ENCODE measurements at regions of chr6 and their contacts with region 1.

Region 1: DNA sequence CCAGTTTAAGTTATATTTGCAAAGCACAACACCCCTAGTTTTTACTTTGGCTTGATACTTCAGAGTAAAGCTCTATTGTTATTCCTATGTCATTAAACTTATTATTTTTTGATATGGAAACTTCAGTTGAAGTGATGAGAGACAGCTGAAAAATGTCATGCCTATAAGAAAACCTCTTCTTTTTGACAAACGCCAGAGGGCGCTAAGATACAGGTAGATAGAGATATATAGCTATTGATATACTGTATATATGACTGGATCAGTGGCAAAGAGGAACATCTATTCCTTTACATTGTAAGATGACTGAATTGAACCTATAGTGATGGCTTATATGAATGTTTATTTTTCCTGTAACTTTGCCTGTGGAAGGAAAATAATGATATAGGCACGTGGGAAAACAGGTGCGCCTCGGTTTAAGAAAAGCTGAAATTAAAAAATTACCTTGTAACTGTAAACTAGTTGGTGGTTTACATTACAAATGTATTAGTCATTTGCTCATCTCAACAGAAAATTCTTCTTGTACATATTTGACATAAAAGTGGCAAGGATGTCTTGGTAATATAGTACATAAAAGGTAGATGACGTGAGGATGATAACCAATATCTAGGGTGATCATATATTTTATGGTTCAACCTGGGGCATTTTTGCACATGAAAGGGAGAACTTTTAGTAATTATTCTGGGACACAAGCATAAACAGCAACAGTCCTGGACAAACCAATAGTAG is 74.1 kb downstream of the LAMA4 start:
- DNase-seq: peak; percentile 60
- ATAC-seq: peak; percentile 76
- H3K4me3 Mint-ChIP-seq: no peak overlapping the region
- H3K27ac Mint-ChIP-seq: no peak overlapping the region
- H3K4me1 Mint-ChIP-seq: no peaks in the 10 kb centered on the region
- H3K27me3 Mint-ChIP-seq: peaks cover 13% of the 10 kb centered on the region

Region 2: DNA sequence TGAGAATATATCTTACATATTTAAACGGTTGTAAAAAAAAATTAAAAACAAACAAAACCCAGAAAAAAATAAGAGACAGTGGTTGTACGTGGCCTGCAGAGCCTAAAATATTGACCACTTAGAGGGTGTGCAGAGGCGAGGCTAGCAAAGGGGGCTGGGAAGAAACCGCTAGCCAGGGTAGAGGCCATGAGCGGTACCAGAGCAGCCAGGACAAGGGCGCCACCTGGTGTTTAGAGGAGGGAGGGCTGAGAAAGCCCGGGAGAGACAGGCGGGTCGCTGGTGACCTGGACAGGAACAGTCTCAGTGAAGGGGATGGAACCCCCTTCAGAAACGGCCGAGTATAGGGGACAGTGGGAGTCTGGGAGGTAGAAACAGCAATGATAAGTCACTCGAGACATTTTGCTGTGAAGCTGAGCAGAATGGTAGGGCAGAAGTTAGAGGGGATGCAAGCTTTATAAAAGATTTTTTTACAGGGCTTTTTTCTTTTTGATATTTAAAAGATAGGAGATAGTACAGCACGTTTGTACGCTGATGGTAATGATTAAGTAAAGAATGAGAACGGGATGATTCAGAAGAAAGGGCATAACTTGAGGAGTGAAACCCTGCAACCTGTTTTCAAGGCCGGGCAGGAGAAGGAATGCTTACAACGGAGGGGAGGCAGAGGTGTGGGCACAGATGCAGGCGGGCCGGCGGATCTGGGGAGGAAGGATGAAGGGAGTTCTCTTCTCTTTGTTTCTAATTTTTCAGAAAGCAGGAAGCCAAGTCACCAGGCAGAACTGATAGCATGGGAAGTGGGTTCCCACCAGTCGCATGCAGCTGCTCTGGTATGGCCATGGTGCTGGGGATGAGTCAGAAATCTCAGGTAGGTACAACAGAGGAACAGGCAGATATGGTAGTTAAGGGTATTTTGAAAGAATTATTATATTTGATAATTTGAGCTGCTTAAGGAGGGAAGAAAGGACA is 16.7 kb before region 1 on chr6:
- CTCF ChIA-PET with region 1: interaction called, 31 read pairs
- POLR2A ChIA-PET with region 1: no interaction called
- intact Hi-C with region 1: no loop called
- DNase-seq: peak; percentile 90
- ATAC-seq: peak; percentile 98
- H3K4me3 Mint-ChIP-seq: peak overlapping the region; percentile 43
- H3K27ac Mint-ChIP-seq: peak overlapping the region; percentile 51
- H3K4me1 Mint-ChIP-seq: peaks cover 16% of the 10 kb centered on the region
- H3K27me3 Mint-ChIP-seq: peaks cover 35% of the 10 kb centered on the region

Region 3: GRCh38 chr6:112311950-112312547 is 131.8 kb after region 1 on chr6:
- CTCF ChIA-PET with region 1: interaction called, 83 read pairs
- POLR2A ChIA-PET with region 1: no interaction called
- intact Hi-C with region 1: loop called (anchors 1 kb)
- DNase-seq: peak; percentile 25
- ATAC-seq: no peak
- H3K4me3 Mint-ChIP-seq: no peak overlapping the region
- H3K27ac Mint-ChIP-seq: no peak overlapping the region
- H3K4me1 Mint-ChIP-seq: no peaks in the 10 kb centered on the region
- H3K27me3 Mint-ChIP-seq: peaks cover 11% of the 10 kb centered on the region

Region 4: DNA sequence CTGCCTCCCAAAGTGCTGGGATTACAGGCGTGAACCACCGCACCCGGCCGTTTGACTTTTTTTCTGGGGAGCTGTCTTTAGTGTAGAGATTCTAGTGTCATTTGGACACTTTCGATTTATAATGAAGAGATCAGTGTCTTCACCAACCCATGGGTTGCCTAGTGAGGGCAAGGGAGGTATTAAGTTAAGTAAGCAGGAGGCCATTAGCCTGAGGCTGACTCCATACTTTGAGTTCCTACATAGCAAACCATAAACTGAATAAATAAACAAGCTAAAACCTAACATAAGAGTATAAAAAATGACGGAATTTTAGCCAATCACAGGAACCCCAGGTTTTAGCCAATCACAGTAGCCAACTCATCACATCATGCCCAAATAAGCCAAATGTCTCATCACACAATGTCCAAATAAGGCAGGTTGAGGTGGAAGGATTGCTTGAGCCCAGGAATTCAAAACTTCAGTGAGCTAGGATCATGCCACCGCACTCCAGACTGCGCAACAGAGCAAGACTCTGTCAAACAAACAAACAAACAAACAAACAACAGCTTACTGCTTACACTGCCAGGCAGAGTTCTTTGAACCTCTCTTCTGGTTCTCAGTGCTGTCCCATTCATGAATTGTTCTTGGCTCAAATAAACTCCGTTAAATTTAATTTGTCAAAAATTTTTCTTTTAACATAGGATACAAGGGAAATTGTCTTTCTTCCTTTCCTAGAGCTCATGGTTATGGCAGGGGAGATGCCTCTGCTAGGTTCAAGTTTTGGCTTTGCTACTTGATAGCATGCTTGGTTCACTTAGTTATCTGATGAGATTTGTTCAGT is 137.0 kb after region 1 on chr6:
- CTCF ChIA-PET with region 1: interaction called, 16 read pairs
- POLR2A ChIA-PET with region 1: no interaction called
- intact Hi-C with region 1: loop called (anchors 1 kb)
- DNase-seq: no peak
- ATAC-seq: no peak
- H3K4me3 Mint-ChIP-seq: no peak overlapping the region
- H3K27ac Mint-ChIP-seq: no peak overlapping the region
- H3K4me1 Mint-ChIP-seq: no peaks in the 10 kb centered on the region
- H3K27me3 Mint-ChIP-seq: peaks cover 8% of the 10 kb centered on the region

Region 5: DNA sequence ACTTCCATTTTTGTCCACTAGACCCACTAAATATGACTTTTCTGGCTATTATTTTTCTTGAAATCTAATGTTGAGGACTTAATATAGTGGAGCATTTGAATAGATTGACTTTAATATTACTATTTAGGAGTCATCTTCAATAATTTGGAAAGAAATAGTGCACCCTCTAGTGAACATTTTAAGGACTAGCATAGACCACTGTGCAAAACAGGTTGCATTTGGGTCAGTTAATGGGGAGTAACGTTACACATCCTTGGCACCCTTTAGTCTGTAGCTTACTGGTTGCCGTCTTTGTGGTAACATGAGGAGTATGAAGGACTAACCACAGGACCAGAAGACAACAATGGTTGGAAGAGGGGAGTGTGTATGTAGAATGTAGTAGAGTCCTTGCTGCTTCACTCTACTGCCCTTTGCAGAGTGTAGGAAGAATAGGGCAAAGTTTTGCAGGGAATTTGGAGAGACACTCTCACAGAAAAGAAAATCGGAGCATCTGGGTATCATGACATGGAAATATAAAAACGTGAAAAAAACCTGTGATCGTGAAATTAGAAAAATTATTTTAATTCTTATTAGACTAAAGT is 192.1 kb after region 1 on chr6:
- CTCF ChIA-PET with region 1: interaction called, 6 read pairs
- POLR2A ChIA-PET with region 1: no interaction called
- intact Hi-C with region 1: loop called in 1 of 2 experiments (anchors 2 kb)
- DNase-seq: no peak
- ATAC-seq: peak; percentile 23
- H3K4me3 Mint-ChIP-seq: no peak overlapping the region
- H3K27ac Mint-ChIP-seq: no peak overlapping the region
- H3K4me1 Mint-ChIP-seq: no peaks in the 10 kb centered on the region
- H3K27me3 Mint-ChIP-seq: peaks cover 18% of the 10 kb centered on the region

Region 6: DNA sequence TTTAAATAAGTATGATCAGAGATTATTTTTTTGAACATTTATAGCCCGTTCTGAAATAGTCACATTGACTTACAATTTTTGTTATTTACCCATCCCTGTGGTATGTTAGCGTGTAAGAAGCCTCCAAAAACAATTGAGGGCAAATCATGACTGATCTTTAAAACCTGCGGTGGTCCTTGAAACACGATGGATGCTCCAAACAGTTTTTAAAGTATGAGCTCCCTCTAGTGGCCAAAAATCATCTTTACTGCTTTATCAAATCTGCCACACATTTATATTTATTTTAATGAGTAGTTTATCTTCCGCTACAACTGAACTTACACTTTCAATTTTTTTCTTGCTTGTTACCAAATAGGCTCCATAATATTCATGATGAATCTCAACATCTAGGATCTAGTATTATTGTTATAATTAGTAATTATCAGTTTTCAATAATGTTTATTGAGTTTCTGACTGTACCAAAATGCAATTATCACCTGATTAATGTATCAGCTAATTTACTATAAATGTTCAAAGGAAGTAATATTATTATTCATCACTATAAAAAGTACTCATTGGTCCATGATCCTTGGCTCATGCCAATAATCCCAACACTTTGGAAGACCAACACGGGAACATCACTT is 1729.1 kb after region 1 on chr6:
- CTCF ChIA-PET with region 1: interaction called, 4 read pairs
- POLR2A ChIA-PET with region 1: no interaction called
- intact Hi-C with region 1: loop called in 1 of 2 experiments (anchors 2 kb)
- DNase-seq: no peak
- ATAC-seq: no peak
- H3K4me3 Mint-ChIP-seq: no peak overlapping the region
- H3K27ac Mint-ChIP-seq: no peak overlapping the region
- H3K4me1 Mint-ChIP-seq: no peaks in the 10 kb centered on the region
- H3K27me3 Mint-ChIP-seq: peaks cover 5% of the 10 kb centered on the region

Measured in activated CD4-positive, alpha-beta T cell treated with anti-CD3 and anti-CD28 coated beads for 36 hours (primary cell).